ENCODE measurements at regions of chr2 and their contacts with region 1.

Region 1: DNA sequence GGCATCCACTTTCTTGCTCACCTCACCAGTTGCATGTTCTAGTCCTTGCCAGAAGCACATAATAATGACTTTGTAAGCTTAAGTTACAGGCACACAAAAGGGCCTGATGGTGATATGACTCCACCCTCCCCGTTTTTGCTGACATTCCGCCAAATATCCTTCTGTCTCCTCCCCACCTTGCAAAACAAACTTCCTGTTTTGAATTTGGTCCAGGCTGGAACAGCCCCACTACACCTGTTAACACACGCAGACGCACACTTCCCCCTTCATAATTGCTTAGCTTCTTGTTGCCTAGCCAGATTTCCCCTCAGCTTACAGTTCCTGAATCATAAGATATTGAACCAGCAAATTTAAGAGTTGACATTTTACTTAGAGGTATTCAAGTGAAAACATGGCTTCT is at the start of gene MGAT5:
- DNase-seq: no peak
- H3K4me3 Mint-ChIP-seq: no peak within 1 kb of the TSS
- H3K27ac Mint-ChIP-seq: no peak within 1 kb of the TSS
- H3K4me1 Mint-ChIP-seq: peaks cover 63% of the 10 kb centered on the region
- H3K27me3 Mint-ChIP-seq: peaks cover 42% of the 10 kb centered on the region
- total RNA-seq, gene MGAT5: 14.0 and 14.1 TPM in 2 replicates

Region 2: GRCh38 chr2:134218930-134219658 is 34.7 kb before region 1 on chr2:
- intact Hi-C with region 1: loop called (anchors 1 kb)
- DNase-seq: no peak
- H3K4me3 Mint-ChIP-seq: no peak overlapping the region
- H3K27ac Mint-ChIP-seq: no peak overlapping the region
- H3K4me1 Mint-ChIP-seq: peaks cover 27% of the 10 kb centered on the region
- H3K27me3 Mint-ChIP-seq: peaks cover 41% of the 10 kb centered on the region

Region 3: DNA sequence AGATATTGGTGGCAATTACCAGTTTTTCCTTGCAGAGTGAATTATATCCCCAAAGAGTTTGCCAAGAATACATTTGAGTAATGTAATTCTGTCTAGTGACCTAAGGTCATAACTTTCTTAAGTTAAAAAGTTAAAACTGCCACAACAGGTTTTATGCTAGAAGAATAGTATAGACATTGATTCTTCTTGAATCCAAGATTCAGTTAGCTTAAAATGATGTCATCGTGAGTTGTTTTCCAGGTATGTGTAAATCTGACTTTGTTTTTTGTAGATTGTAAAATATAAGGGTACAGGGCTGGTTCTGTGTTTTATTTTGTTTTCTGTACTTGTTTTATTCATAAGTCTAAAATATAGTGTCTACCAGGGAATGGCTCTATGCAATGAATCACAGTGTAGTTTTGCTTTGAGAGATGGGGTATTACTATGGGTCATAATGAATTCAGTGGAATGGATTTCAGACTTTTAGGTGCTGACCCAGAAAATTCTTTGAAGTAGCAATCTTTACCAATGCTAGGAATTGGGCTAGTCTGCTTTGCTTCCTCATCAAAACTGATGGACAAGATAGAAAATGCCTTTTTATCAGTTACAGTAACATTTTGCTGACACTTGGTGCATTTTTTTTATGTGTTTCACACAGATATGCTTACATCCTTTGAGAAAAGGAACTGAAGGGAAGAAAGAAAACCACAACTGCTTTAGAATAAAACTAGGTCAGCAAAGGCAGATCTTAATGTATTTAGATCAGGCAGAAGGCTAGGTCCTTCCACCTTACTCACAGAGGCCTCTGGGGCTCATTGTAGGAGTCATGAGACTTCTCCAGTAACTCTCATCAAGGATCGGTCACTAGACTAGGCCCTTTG is 20.7 kb before region 1 on chr2:
- intact Hi-C with region 1: loop called (anchors 1 kb)
- DNase-seq: no peak
- H3K4me3 Mint-ChIP-seq: no peak overlapping the region
- H3K27ac Mint-ChIP-seq: peak overlapping the region; percentile 10
- H3K4me1 Mint-ChIP-seq: peaks cover 42% of the 10 kb centered on the region
- H3K27me3 Mint-ChIP-seq: peaks cover 17% of the 10 kb centered on the region

Region 4: GRCh38 chr2:134282629-134283400 is 29.0 kb after region 1 on chr2:
- intact Hi-C with region 1: loop called (anchors 1 kb)
- DNase-seq: no peak
- H3K4me3 Mint-ChIP-seq: no peak overlapping the region
- H3K27ac Mint-ChIP-seq: peak overlapping the region; percentile 43
- H3K4me1 Mint-ChIP-seq: peaks cover 25% of the 10 kb centered on the region
- H3K27me3 Mint-ChIP-seq: peaks cover 41% of the 10 kb centered on the region

Region 5: GRCh38 chr2:134290358-134290757 is 36.6 kb after region 1 on chr2:
- intact Hi-C with region 1: loop called (anchors 1 kb)
- DNase-seq: no peak
- H3K4me3 Mint-ChIP-seq: no peak overlapping the region
- H3K27ac Mint-ChIP-seq: no peak overlapping the region
- H3K4me1 Mint-ChIP-seq: peaks cover 9% of the 10 kb centered on the region
- H3K27me3 Mint-ChIP-seq: peaks cover 24% of the 10 kb centered on the region

Region 6: GRCh38 chr2:134668821-134669220 is 415.0 kb after region 1 on chr2:
- intact Hi-C with region 1: loop called (anchors 5 kb)
- DNase-seq: peak; percentile 76
- H3K4me3 Mint-ChIP-seq: no peak overlapping the region
- H3K27ac Mint-ChIP-seq: peak overlapping the region; percentile 28
- H3K4me1 Mint-ChIP-seq: peaks cover 67% of the 10 kb centered on the region
- H3K27me3 Mint-ChIP-seq: peaks cover 33% of the 10 kb centered on the region

Measured in activated T-helper 2 cell treated with anti-CD3 and anti-CD28 coated beads, Interferon-gamma antibody, Interleukin-2, Interleukin-4, amounts not matched to agents 10 μg/mL and 5 μg/mL and 100 μg/mL, durations not matched to agents 14 hours and 24 hours and 36 hours (primary cell).